Endothelial cell of umbilical vein (primary cell): ENCODE measurements at regions of chr2 and their contacts with region 1.

Region 1: GRCh38 chr2:178829299-178829960 is 22.2 kb upstream of the TTN start:
- DNase-seq: peak; percentile 94
- H3K4me3 ChIP-seq: peak overlapping the region in 1 of 3 experiments; percentile 37
- H3K27ac ChIP-seq: peak overlapping the region; percentile 71
- H3K4me1 ChIP-seq: peaks cover 56% of the 10 kb centered on the region
- H3K27me3 ChIP-seq: no peaks in the 10 kb centered on the region
- CTCF ChIP-seq: no peak
- POLR2A ChIP-seq: no peak

Region 2: GRCh38 chr2:178787934-178788333 is 41.5 kb before region 1 on chr2:
- CTCF ChIA-PET with region 1: no interaction called
- POLR2A ChIA-PET with region 1: no interaction called
- dilution Hi-C with region 1: no loop called
- intact Hi-C with region 1: no loop called
- DNase-seq: no peak
- H3K4me3 ChIP-seq: no peak overlapping the region
- H3K27ac ChIP-seq: no peak overlapping the region
- H3K4me1 ChIP-seq: no peaks in the 10 kb centered on the region
- H3K27me3 ChIP-seq: peaks cover 0 to 4% of the 10 kb centered on the region in 2 experiments
- CTCF ChIP-seq: no peak
- POLR2A ChIP-seq: no peak

Region 3: DNA sequence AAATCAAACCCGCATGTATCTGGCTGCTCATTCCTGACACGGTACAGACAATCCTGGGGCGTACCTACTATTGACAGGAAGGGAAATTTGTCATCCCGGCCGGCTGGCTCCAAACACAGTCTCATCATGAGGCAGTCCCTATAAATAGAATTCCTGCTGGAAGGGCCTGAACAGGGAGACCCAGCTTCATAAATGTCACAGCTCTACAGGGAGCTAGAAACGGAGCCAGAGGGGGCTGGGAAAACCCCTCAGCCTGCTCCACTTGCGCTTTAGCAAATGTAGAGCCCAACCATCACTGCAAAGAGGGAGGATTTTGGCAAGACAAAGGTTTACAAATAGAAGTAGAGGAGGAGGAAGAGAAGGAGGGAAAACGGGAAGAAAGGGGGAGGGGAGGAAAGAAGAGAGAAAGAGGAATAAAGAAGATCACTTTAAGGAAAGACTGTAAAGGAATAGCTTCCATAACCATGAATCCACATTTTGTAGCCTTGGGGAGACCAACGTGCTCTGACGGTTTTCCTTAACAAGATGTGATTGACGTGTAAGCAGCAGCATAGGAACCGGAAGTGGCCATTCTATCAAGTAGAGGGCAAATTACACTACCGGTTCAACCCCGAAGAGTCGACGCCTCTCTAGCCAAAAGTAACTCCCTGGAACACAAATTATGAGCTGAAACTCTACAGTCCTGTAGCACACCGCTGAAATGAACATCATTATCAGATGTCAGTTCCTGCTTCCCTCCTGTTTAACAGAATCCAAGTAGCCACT is 34.6 kb after region 1 on chr2:
- CTCF ChIA-PET with region 1: no interaction called
- POLR2A ChIA-PET with region 1: no interaction called
- dilution Hi-C with region 1: no loop called
- intact Hi-C with region 1: loop called (anchors 2 kb)
- DNase-seq: peak; percentile 62
- H3K4me3 ChIP-seq: no peak overlapping the region
- H3K27ac ChIP-seq: peak overlapping the region; percentile 56
- H3K4me1 ChIP-seq: peaks cover 25% of the 10 kb centered on the region
- H3K27me3 ChIP-seq: no peaks in the 10 kb centered on the region
- CTCF ChIP-seq: no peak
- POLR2A ChIP-seq: no peak

Region 4: GRCh38 chr2:178882666-178883440 is 53.4 kb after region 1 on chr2:
- CTCF ChIA-PET with region 1: interaction called, 5 read pairs
- POLR2A ChIA-PET with region 1: interaction called, 3 read pairs
- dilution Hi-C with region 1: no loop called
- intact Hi-C with region 1: loop called (anchors 2 kb)
- DNase-seq: peak; percentile 95
- H3K4me3 ChIP-seq: peak overlapping the region in 1 of 3 experiments; percentile 30
- H3K27ac ChIP-seq: peak overlapping the region; percentile 46
- H3K4me1 ChIP-seq: peaks cover 23% of the 10 kb centered on the region
- H3K27me3 ChIP-seq: no peaks in the 10 kb centered on the region
- CTCF ChIP-seq: no peak
- POLR2A ChIP-seq: no peak

Region 5: DNA sequence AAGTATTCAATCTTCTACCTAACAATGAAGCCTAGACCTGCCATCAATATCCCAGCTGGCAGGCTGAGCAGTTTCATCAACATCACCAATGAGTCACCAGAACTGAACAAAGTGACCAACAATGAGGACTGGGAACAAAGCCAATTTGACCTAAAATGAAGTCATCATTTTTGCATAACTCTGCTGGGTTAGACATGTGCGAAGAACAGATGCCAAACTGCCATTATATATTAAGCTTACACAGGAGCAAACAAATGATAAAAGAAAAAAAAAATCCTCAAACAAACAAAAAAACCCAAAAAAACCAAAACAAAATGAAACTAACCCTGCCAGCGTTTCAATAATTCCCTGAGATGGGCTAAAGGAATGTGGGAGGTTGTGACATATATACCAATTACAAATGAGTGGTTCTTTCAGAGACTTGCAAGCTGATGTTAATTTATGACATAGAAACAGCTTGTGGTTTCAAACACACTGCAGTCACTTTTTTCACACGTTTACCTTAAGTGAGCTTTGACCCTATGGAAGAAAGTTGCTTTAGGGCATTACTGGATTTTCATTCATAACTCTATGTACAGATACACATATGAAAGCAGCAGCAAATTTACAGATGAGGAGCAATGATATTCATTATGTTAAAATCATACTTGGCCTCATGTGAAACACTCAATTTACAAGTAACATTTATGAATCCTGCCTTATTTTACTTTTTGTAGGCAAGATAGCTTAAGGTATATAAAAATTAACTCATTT is 277.4 kb after region 1 on chr2:
- CTCF ChIA-PET with region 1: interaction called, 3 read pairs
- POLR2A ChIA-PET with region 1: no interaction called
- dilution Hi-C with region 1: no loop called
- intact Hi-C with region 1: loop called (anchors 5 kb)
- DNase-seq: peak; percentile 99
- H3K4me3 ChIP-seq: no peak overlapping the region
- H3K27ac ChIP-seq: peak overlapping the region; percentile 73
- H3K4me1 ChIP-seq: peaks cover 25% of the 10 kb centered on the region
- H3K27me3 ChIP-seq: no peaks in the 10 kb centered on the region
- CTCF ChIP-seq: no peak
- POLR2A ChIP-seq: no peak

Region 6: DNA sequence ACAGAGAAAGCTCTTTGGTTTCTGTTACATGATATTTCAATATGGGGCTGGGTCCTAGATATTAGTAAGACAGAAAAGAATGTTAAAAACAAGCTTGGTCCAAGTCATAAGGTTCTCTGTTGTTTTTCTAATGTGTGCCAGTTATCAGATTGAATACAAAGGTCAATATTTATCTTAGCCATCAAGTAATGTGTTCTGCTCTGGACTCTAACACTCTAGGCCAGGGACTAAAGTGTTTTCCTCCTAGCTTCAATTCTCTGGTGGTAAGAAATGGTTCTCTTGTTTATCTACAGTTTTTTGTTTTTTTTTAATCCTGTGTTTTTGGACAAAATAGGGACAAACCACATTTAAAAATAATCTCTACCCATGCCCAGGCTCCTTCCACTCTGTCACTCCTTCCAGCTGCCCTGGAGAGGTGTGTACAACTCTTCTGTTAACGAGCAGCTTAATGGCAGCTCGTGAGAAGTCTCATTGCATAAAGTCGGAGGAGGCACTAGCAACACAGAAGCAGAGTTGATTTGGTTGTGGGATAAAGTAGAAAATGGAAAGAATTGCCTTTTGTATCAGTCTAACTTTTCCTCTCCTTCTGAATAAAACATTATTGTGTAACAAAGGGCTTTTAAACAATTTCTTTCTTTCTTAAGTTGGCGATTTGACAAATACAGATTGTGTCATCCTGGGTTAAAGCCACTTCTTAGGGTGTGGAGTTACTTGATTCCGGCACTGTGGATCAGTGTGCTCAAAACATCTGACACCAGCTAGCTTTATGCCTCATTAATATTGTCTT is 443.2 kb after region 1 on chr2:
- CTCF ChIA-PET with region 1: no interaction called
- POLR2A ChIA-PET with region 1: no interaction called
- dilution Hi-C with region 1: no loop called
- intact Hi-C with region 1: loop called (anchors 5 kb)
- DNase-seq: peak; percentile 75
- H3K4me3 ChIP-seq: no peak overlapping the region
- H3K27ac ChIP-seq: peak overlapping the region; percentile 43
- H3K4me1 ChIP-seq: peaks cover 20% of the 10 kb centered on the region
- H3K27me3 ChIP-seq: no peaks in the 10 kb centered on the region
- CTCF ChIP-seq: no peak
- POLR2A ChIP-seq: no peak

Region 7: GRCh38 chr2:179524809-179525339 is 695.4 kb after region 1 on chr2:
- CTCF ChIA-PET with region 1: no interaction called
- POLR2A ChIA-PET with region 1: no interaction called
- dilution Hi-C with region 1: no loop called
- intact Hi-C with region 1: no loop called
- DNase-seq: no peak
- H3K4me3 ChIP-seq: no peak overlapping the region
- H3K27ac ChIP-seq: no peak overlapping the region
- H3K4me1 ChIP-seq: no peaks in the 10 kb centered on the region
- H3K27me3 ChIP-seq: no peaks in the 10 kb centered on the region
- CTCF ChIP-seq: no peak
- POLR2A ChIP-seq: no peak